ENCODE measurements at regions of chr22 and their contacts with region 1.

Region 1: DNA sequence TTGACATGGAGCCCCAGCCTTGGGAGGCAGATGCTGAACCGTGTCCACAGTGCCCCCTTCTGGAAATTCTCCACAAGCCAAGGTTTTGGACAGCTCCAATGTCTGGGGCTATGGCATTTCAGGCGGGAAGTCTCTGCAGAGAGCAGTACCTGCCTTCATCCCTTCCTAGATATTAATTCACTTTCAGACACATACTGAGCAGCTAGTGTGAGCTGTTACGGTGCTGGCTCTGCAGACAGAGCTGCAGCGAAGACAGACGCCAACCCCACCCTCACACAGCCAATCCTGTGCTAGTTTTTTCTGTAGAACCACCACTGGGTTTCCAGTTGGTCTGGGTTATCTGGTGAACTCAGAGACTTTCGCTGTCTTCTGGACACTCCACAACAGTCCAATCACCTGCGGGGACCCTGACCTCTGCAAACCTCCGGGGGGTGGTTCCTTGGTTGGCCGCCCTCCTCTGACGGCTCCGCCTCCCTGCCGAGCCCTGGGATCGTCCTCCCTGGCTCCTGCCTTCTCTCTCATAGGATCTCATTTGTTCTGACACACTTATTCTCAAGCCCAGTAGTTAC is 9.1 kb downstream of the LMF2 start:
- DNase-seq: peak; percentile 86
- H3K4me3 Mint-ChIP-seq: no peak overlapping the region
- H3K27ac Mint-ChIP-seq: no peak overlapping the region
- H3K4me1 Mint-ChIP-seq: no peaks in the 10 kb centered on the region
- H3K27me3 Mint-ChIP-seq: no peaks in the 10 kb centered on the region

Region 2: DNA sequence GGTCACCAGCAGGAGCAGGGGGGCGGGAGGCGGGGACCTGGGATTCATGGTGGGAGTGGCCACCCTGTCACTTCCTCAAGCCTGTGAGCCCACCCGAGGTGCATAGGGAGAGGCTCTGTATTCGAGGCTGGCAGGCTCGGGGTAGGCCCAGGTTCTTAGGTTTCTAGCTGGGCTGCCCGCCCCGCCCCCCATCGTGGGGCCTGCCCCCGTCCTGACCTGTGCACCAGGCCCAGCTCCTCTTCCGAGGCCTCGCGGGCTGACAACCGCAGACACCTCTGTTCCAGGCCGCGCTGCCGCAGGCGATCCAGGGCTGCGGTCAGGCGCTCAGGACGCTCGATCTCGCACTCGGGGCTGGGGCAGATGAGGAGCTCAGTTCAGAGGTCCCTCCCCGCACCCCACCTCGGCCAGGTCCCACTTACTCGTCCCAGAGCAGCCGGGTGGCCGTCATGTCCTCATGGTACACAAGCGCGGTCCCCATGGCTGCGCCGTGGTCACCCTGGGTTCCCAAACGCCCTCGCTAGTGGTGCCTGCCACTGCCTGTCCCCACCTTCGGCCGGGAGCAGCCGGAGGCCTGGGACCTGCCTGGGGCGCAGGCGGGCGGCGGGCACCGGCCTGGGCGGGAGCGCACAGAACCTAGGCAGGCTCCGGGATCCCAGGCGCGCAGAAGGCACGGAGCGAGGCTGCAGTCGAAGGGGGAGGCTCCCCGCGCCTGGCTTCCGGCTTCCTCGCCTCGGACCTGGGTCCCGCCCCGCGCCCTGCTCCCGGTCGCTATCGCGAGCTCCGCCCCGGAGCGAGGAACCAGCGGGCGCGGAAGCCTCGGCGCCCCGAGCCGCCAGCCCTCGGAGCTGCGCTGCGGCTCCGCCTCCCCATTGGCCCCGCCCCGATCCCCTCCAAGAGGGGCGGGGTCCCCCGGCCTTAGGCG is 247.6 kb before region 1 on chr22 and contains the start of gene HDAC10:
- CTCF ChIA-PET with region 1: interaction called, 4 read pairs
- intact Hi-C with region 1: loop called (anchors 5 kb)
- DNase-seq: peak; percentile 90
- H3K4me3 Mint-ChIP-seq: peak within 1 kb of the TSS; percentile 81
- H3K27ac Mint-ChIP-seq: no peak within 1 kb of the TSS
- H3K4me1 Mint-ChIP-seq: peaks cover 19% of the 10 kb centered on the region
- H3K27me3 Mint-ChIP-seq: no peaks in the 10 kb centered on the region
- total RNA-seq, gene HDAC10: 35.4 to 38.0 TPM

Region 3: GRCh38 chr22:50276143-50276542 is 222.3 kb before region 1 on chr22:
- CTCF ChIA-PET with region 1: interaction called, 4 read pairs
- intact Hi-C with region 1: loop called (anchors 2 kb)
- DNase-seq: peak; percentile 70
- H3K4me3 Mint-ChIP-seq: no peak overlapping the region
- H3K27ac Mint-ChIP-seq: no peak overlapping the region
- H3K4me1 Mint-ChIP-seq: no peaks in the 10 kb centered on the region
- H3K27me3 Mint-ChIP-seq: no peaks in the 10 kb centered on the region

Region 4: DNA sequence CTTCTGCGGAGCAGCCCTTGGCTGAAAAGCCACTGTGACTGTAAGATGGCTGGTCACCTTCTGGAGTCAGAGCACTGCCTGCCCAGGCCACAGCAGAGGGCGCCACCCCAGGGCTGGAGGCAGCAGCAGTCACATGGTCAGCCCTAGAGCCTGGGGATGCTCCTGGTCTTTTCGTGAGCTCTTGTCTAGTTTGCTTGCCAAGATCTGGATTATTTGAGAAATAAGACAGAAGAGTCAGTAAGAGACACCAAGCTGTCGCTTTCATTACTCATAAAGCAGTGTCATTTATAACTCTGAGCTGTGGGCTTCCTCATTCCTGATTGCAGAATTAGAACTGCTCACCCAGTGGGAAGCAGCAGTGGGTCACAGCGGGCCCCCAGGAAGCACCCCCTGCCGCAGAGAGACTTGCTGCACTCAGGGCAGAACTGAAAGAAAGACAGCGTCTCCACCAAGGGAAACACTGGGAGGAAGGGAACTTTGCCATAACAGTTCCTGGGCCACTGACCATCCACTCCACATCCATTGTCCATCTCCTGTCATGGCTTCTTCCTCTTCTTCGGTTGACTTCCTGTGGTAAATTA is 98.6 kb before region 1 on chr22:
- CTCF ChIA-PET with region 1: interaction called, 14 read pairs
- intact Hi-C with region 1: loop called (anchors 1 kb)
- DNase-seq: peak; percentile 58
- H3K4me3 Mint-ChIP-seq: no peak overlapping the region
- H3K27ac Mint-ChIP-seq: peak overlapping the region; percentile 43
- H3K4me1 Mint-ChIP-seq: peaks cover 25% of the 10 kb centered on the region
- H3K27me3 Mint-ChIP-seq: no peaks in the 10 kb centered on the region

Region 5: GRCh38 chr22:50456466-50457234 is 41.8 kb before region 1 on chr22:
- CTCF ChIA-PET with region 1: interaction called, 16 read pairs
- intact Hi-C with region 1: loop called (anchors 5 kb)
- DNase-seq: no peak
- H3K4me3 Mint-ChIP-seq: no peak overlapping the region
- H3K27ac Mint-ChIP-seq: no peak overlapping the region
- H3K4me1 Mint-ChIP-seq: peaks cover 9% of the 10 kb centered on the region
- H3K27me3 Mint-ChIP-seq: no peaks in the 10 kb centered on the region

Region 6: GRCh38 chr22:50474668-50475492 is 23.5 kb before region 1 on chr22 and contains the start of gene SBF1:
- CTCF ChIA-PET with region 1: interaction called, 9 read pairs
- intact Hi-C with region 1: loop called (anchors 2 kb)
- DNase-seq: peak; percentile 90
- H3K4me3 Mint-ChIP-seq: peak within 1 kb of the TSS; percentile 95
- H3K27ac Mint-ChIP-seq: peak within 1 kb of the TSS; percentile 87
- H3K4me1 Mint-ChIP-seq: peaks cover 46% of the 10 kb centered on the region
- H3K27me3 Mint-ChIP-seq: peaks cover 3% of the 10 kb centered on the region
- total RNA-seq, gene SBF1: 100 TPM

Region 7: GRCh38 chr22:50516071-50516470 is 17.7 kb after region 1 on chr22:
- CTCF ChIA-PET with region 1: no interaction called
- intact Hi-C with region 1: no loop called
- DNase-seq: no peak
- H3K4me3 Mint-ChIP-seq: no peak overlapping the region
- H3K27ac Mint-ChIP-seq: no peak overlapping the region
- H3K4me1 Mint-ChIP-seq: peaks cover 25% of the 10 kb centered on the region
- H3K27me3 Mint-ChIP-seq: no peaks in the 10 kb centered on the region

Measured in activated naive CD4-positive, alpha-beta T cell treated with anti-CD3 and anti-CD28 coated beads for 36 hours (primary cell).